ENCODE measurements at regions of chr20 and their contacts with region 1.

Region 1: DNA sequence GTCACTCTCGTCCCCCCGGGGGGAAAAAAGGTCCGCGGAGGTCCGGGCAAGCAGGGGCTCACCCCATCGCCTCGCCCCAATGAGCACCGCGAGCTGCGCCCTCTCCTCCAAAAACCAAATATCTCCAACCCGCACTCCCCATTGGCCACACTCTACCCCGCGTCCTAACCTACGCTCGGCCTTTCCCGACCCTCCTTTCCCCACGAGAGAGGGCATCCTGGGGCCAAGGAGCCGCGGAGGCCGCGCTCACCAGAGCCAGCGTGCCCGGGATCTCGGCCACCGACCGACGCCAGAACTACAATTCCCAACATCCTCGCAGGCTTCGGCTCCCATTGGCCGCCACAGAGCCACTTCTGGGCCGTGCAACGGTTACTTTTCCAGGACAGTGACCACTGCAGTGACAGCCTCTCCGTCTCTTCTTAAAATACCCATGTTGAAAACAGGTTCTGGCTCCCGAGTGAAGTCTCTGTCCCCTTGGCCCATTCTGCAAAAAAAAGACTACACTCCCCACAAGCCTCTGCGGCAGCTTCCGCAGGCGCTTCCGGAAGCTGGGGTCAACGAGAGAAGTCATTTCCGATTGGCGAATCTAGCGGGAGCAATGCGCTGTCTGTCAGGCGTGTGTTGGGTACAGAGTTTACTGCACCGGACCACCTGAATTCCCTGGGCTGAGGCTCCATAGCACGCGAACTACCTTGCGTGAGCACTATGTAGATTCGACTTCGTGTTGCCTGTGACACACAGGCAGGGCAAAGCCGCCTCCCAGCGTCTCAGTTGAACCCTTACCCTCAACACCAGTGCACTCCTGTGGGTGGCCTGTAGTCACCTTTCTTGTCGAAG is at the start of gene ZNF343:
- DNase-seq: peak; percentile 59 to 91 (median 74)
- ATAC-seq: peak; percentile 93
- H3K4me3 Mint-ChIP-seq: peak within 1 kb of the TSS; percentile 95 to 100 (median 100)
- H3K27ac Mint-ChIP-seq: peak within 1 kb of the TSS; percentile 90 to 99 (median 97)
- H3K4me1 Mint-ChIP-seq: peaks cover 12 to 29% (median 20%) of the 10 kb centered on the region in 4 donors
- H3K27me3 Mint-ChIP-seq: peaks cover 0 to 21% (median 6%) of the 10 kb centered on the region in 5 donors
- polyA plus RNA-seq, gene ZNF343: 1.7 to 5.0 (median 3.2) TPM

Region 2: DNA sequence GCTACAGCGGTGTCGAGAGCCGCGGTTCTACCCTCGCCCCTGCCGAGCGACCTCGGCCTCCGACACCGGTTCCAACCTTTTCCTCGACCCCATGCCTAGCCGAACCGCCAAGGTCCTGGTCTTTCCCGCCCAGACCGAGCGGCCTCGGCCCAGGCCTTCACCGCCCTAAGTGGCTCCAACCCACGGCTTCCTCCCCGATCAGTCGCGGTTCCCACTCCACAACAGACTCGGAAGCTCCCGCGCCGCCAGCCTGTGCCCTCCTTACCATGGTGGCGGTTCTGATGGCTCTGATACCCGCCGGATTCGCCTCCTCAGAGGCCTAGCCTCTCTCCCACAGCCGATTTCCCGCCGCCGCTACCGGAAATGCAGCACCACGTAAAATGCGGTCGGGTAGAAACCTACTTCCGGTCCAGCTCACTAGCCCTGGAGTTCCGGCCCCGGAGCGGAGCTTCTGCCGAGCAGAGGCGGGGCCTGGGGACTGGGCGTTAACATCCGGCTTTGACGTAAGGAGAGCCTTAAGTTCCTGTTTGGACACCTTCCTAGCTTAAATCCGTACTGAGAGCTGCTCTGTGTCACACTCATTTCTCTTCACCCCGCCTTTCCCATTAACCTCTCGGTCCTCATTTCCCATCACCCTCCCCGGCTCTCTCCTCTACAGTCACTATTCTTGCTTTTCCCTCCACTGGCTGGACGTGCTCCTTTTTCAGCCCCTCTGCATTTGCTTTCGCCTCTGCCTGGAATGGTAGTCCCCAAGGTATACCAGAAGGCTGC is 38.2 kb before region 1 on chr20 and contains the start of gene SNRPB:
- POLR2A ChIA-PET with region 1: interaction called, 32 read pairs
- DNase-seq: peak; percentile 85 to 98 (median 96)
- ATAC-seq: peak; percentile 90
- H3K4me3 Mint-ChIP-seq: peak within 1 kb of the TSS; percentile 94 to 99 (median 99)
- H3K27ac Mint-ChIP-seq: peak within 1 kb of the TSS; percentile 94 to 100 (median 99)
- H3K4me1 Mint-ChIP-seq: peaks cover 31 to 49% (median 41%) of the 10 kb centered on the region in 4 donors
- H3K27me3 Mint-ChIP-seq: no peaks in the 10 kb centered on the region
- polyA plus RNA-seq, gene SNRPB: 218 to 245 (median 240) TPM

Region 3: DNA sequence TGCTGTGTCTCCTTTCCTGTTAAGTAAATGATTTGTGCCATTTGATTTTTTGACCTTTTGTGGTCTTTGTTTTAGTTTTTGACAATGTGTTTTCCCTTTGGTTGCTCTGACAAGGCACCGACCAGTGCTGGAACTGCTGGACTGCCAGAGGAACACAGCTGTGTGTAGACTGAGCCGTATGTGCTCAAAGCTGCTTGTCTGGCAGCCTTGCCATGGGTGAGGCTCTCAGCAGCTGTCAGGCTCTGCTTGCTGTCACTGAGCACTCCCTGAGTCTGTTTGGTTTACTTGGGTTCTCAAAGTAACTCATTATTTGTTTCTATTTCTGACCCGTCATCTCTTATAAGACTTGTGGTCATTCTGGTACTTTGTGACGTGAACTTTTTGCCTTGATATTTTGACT is 23.2 kb before region 1 on chr20:
- POLR2A ChIA-PET with region 1: no interaction called
- DNase-seq: no peak
- ATAC-seq: no peak
- H3K4me3 Mint-ChIP-seq: no peak overlapping the region
- H3K27ac Mint-ChIP-seq: no peak overlapping the region
- H3K4me1 Mint-ChIP-seq: peaks cover 0 to 2% (median 0%) of the 10 kb centered on the region in 4 donors
- H3K27me3 Mint-ChIP-seq: no peaks in the 10 kb centered on the region

Region 4: GRCh38 chr20:2523919-2524708 is 15.3 kb after region 1 on chr20:
- POLR2A ChIA-PET with region 1: interaction called, 11 read pairs
- DNase-seq: peak; percentile 80 to 96 (median 92)
- ATAC-seq: peak; percentile 85 to 88
- H3K4me3 Mint-ChIP-seq: peak overlapping the region; percentile 85 to 94 (median 90)
- H3K27ac Mint-ChIP-seq: peak overlapping the region; percentile 72 to 92 (median 86)
- H3K4me1 Mint-ChIP-seq: peaks cover 9 to 24% (median 17%) of the 10 kb centered on the region in 4 donors
- H3K27me3 Mint-ChIP-seq: peaks cover 0 to 2% (median 0%) of the 10 kb centered on the region in 5 donors

Region 5: DNA sequence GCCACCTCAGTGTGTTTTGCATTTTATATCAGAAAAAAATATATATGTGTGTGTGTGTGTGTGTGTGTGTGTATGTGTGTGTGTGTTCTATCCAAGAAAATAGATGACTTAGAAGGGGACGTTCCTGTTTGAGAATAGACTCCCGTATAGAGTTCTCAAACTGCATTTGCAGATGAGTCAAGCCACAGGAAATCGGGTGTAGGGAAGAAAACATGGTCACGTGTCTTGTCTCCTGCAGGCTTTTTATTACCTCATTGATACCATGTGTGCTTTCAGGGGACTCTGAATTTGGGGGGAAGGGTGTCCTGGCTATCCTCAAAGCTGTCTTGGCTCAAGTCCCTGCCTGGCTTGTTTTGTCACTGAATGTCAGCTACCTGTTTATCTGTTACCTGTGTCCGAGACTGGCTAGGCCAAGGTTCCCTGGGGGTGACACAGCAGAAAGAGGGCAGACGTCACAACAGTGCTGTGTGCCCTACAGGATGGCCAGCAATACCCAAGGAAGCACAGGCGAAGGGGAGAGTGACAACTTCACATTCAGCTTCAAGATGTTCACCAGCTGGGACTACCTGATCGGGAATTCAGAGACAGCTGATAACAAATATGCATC is 87.9 kb after region 1 on chr20:
- POLR2A ChIA-PET with region 1: no interaction called
- DNase-seq: no peak
- ATAC-seq: no peak
- H3K4me3 Mint-ChIP-seq: no peak overlapping the region
- H3K27ac Mint-ChIP-seq: no peak overlapping the region
- H3K4me1 Mint-ChIP-seq: no peaks in the 10 kb centered on the region
- H3K27me3 Mint-ChIP-seq: peaks cover 5 to 46% (median 24%) of the 10 kb centered on the region in 5 donors

Measured in naive thymus-derived CD8-positive, alpha-beta T cell (primary cell).